Gastrocnemius medialis (tissue), 4 donors: ENCODE measurements at regions of chr12 and their contacts with region 1.

Region 1: GRCh38 chr12:109995686-109996482 is at the start of gene GIT2:
- DNase-seq: peak; percentile 90 to 92
- ATAC-seq: peak; percentile 81
- H3K4me3 ChIP-seq: peak within 1 kb of the TSS; percentile 83 to 99 (median 98)
- H3K27ac ChIP-seq: peak within 1 kb of the TSS; percentile 81 to 90 (median 86)
- H3K4me1 ChIP-seq: peaks cover 36 to 53% of the 10 kb centered on the region in 2 donors
- H3K27me3 ChIP-seq: no peaks in the 10 kb centered on the region
- CTCF ChIP-seq: no peak
- POLR2A ChIP-seq: peak; percentile 77 to 78
- total RNA-seq, gene GIT2: 23.4 to 32.1 (median 23.6) TPM

Region 2: GRCh38 chr12:109880016-109880931 is 115.6 kb before region 1 on chr12 and contains the start of gene GLTP:
- in situ Hi-C with region 1: no loop called
- intact Hi-C with region 1: no loop called
- DNase-seq: peak; percentile 61 to 76
- ATAC-seq: peak; percentile 91 to 96
- H3K4me3 ChIP-seq: peak within 1 kb of the TSS; percentile 66 to 94 (median 83)
- H3K27ac ChIP-seq: peak within 1 kb of the TSS; percentile 60 to 81 (median 78)
- H3K4me1 ChIP-seq: peaks cover 17 to 20% of the 10 kb centered on the region in 2 donors
- H3K27me3 ChIP-seq: no peaks in the 10 kb centered on the region
- CTCF ChIP-seq: peak in 4 of 5 experiments; percentile 85 to 98 (median 88)
- POLR2A ChIP-seq: peak; percentile 63 to 67
- total RNA-seq, gene GLTP: 18.3 to 34.0 (median 22.4) TPM

Region 3: GRCh38 chr12:109899783-109900751 is 95.8 kb before region 1 on chr12 and contains the start of gene TCHP:
- in situ Hi-C with region 1: no loop called
- intact Hi-C with region 1: loop called (anchors 5 kb)
- DNase-seq: peak; percentile 74 to 80
- ATAC-seq: peak; percentile 96 to 97
- H3K4me3 ChIP-seq: peak within 1 kb of the TSS; percentile 69 to 97 (median 80)
- H3K27ac ChIP-seq: peak within 1 kb of the TSS; percentile 76 to 91 (median 83)
- H3K4me1 ChIP-seq: peaks cover 10 to 15% of the 10 kb centered on the region in 2 donors
- H3K27me3 ChIP-seq: no peaks in the 10 kb centered on the region
- CTCF ChIP-seq: peak in 2 of 5 experiments; percentile 34 to 35
- POLR2A ChIP-seq: peak in 1 of 2 donors; percentile 24
- total RNA-seq, gene TCHP: 7.3 to 9.4 (median 8.0) TPM

Region 4: GRCh38 chr12:110042264-110042663 is 46.4 kb after region 1 on chr12:
- in situ Hi-C with region 1: no loop called
- intact Hi-C with region 1: loop called (anchors 2 kb)
- DNase-seq: peak; percentile 74 to 85
- ATAC-seq: peak; percentile 96 to 97
- H3K4me3 ChIP-seq: no peak overlapping the region
- H3K27ac ChIP-seq: peak overlapping the region; percentile 74 to 84 (median 80)
- H3K4me1 ChIP-seq: peaks cover 47 to 52% of the 10 kb centered on the region in 2 donors
- H3K27me3 ChIP-seq: no peaks in the 10 kb centered on the region
- CTCF ChIP-seq: no peak
- POLR2A ChIP-seq: no peak

Region 5: DNA sequence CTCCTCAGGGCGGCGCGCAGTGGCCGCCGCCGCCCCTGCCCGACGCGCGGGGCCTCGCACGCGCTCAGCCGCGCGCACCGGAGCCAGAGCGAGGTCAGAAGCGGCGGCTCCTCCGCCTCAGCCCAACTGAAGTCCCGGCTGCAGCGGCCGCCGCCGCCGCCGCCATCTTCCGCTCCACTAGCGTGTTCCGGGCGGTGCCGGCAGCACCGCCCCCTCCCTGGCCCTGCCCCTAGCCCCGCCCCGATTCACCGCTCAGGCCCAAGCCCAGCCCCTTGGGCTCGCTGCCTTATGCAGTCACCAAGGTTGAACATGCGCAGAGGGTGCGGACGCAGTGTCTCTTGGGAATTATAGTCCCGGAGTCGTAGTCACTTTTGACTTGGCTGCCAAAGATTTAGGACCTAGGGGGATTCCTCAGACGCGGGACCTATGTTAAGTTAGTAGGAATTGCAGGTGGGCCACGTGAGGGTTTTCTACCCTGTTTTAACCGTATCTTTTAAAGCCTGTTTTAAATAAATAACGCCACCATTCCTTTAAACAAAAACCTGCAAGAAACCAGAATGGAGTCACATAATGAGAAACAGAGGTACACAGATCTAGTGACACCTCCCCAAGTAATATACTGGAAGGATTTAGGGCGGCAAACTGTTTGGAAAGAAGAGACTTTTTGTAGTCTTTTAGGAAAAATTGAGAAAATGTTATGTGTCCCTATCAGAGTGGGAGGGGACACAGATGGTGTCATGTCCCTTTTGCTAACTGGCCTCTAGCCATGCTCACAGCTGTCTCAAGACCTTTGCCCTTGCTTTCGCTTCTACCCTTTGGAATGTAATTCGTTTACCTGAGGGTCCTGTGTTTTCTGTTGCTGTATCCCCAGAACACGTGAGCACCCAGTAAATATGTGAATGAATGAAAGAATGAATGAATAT is 587.5 kb after region 1 on chr12 and contains the start of gene PPTC7:
- in situ Hi-C with region 1: no loop called
- intact Hi-C with region 1: loop called (anchors 10 kb)
- DNase-seq: peak; percentile 96 to 97
- ATAC-seq: peak; percentile 60 to 70
- H3K4me3 ChIP-seq: peak within 1 kb of the TSS; percentile 67 to 83 (median 78)
- H3K27ac ChIP-seq: peak within 1 kb of the TSS; percentile 91 to 98 (median 94)
- H3K4me1 ChIP-seq: peaks cover 56 to 58% of the 10 kb centered on the region in 2 donors
- H3K27me3 ChIP-seq: no peaks in the 10 kb centered on the region
- CTCF ChIP-seq: peak in 1 of 5 experiments; percentile 7
- POLR2A ChIP-seq: peak; percentile 98 to 99
- total RNA-seq, gene PPTC7: 27.6 to 85.8 (median 58.4) TPM

Region 6: DNA sequence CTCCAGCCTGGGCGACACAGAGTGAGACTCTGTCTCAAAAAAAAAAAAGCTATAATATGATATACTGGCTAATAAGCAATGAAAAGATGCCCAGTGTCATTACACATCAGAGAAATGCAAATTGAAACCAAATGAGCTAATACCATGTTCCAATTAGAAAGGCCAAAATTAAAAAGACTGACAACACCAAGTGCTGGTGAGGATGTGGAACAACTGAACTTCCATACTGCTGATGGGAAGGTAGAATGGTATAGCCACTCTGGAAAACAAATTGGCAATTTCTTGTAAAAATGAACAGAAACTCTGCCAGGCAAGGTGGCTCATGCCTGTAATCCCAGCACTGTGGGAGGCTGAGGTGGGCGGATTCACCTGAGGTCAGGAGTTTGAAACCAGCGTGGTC is 1381.6 kb after region 1 on chr12:
- in situ Hi-C with region 1: no loop called
- intact Hi-C with region 1: no loop called
- DNase-seq: no peak
- ATAC-seq: no peak
- H3K4me3 ChIP-seq: no peak overlapping the region
- H3K27ac ChIP-seq: no peak overlapping the region
- H3K4me1 ChIP-seq: no peaks in the 10 kb centered on the region
- H3K27me3 ChIP-seq: no peaks in the 10 kb centered on the region
- CTCF ChIP-seq: no peak
- POLR2A ChIP-seq: no peak